ENCODE measurements at regions of chr10 and their contacts with region 1.

Region 1: DNA sequence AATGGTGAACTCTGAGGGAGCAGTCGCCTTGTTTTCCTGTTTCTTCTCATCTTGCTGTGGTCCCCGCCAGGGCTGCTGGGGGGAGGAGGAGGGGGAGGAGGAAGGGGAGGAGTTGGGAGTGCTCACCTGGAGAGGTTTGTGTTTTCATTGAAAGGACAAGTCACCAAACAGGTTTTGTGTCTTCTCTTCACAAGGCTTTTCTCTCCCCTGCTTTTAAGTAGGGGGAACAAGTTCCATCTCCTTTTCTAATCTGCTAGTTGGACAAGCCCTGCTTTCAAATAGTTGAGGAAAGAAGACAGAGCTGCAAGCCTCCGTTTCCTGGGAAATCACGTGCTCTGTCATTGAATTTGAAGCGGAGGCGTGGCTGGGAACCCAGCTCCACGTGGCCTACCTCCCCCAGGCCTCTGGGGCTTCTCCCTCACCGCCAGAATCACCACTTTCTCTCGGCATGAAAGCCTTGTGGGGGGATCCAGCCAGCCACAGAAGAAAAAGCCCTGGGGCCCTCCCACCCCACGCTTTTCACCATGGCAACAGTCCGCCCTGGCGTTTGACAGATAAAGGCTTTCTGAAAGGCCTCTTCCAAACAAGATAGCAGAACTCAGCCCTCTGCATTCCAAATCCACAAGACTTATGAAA is 51.5 kb downstream of the PROSER2 start:
- DNase-seq: peak; percentile 88
- H3K4me3 ChIP-seq: no peak overlapping the region
- H3K27ac ChIP-seq: peak overlapping the region; percentile 64
- H3K4me1 ChIP-seq: peaks cover 39% of the 10 kb centered on the region
- H3K27me3 ChIP-seq: no peaks in the 10 kb centered on the region
- CTCF ChIP-seq: no peak

Region 2: DNA sequence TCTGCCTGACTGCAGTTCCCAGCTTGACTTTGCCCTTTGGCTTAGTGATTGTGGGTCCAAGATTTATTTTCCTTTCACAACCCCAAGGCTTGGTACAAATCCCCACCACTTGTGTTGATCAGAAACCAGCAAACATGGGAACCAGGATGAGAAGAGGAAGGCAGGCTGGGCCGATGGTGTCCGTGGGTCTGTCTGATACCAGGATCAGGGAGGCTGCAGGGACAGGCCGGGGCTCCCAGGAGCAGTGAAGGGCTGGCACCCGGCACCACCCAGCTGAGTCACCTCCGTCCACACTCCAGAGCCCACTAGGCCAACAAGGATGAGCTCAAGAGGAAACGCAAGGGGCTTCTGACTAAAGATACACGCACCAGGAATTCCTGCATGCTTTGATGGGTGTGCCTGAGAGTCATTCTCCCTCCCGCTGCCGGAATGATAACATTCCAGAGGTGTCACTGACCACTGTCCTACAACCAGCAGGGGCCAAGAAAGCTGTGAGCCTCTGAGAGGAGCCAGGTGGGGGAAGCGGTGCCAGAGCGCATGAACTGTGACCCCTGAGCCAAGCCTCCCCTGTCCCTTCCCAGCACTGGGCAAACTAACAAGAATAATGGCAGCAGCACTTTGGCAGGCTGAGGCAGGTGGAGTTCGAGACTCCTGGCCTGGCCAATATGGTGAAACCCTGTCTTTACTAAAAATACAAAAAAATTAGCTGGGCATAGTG is 80.7 kb before region 1 on chr10:
- CTCF ChIA-PET with region 1: no interaction called
- POLR2A ChIA-PET with region 1: no interaction called
- intact Hi-C with region 1: loop called (anchors 10 kb)
- DNase-seq: no peak
- H3K4me3 ChIP-seq: no peak overlapping the region
- H3K27ac ChIP-seq: peak overlapping the region; percentile 48
- H3K4me1 ChIP-seq: peaks cover 52% of the 10 kb centered on the region
- H3K27me3 ChIP-seq: no peaks in the 10 kb centered on the region
- CTCF ChIP-seq: no peak

Region 3: DNA sequence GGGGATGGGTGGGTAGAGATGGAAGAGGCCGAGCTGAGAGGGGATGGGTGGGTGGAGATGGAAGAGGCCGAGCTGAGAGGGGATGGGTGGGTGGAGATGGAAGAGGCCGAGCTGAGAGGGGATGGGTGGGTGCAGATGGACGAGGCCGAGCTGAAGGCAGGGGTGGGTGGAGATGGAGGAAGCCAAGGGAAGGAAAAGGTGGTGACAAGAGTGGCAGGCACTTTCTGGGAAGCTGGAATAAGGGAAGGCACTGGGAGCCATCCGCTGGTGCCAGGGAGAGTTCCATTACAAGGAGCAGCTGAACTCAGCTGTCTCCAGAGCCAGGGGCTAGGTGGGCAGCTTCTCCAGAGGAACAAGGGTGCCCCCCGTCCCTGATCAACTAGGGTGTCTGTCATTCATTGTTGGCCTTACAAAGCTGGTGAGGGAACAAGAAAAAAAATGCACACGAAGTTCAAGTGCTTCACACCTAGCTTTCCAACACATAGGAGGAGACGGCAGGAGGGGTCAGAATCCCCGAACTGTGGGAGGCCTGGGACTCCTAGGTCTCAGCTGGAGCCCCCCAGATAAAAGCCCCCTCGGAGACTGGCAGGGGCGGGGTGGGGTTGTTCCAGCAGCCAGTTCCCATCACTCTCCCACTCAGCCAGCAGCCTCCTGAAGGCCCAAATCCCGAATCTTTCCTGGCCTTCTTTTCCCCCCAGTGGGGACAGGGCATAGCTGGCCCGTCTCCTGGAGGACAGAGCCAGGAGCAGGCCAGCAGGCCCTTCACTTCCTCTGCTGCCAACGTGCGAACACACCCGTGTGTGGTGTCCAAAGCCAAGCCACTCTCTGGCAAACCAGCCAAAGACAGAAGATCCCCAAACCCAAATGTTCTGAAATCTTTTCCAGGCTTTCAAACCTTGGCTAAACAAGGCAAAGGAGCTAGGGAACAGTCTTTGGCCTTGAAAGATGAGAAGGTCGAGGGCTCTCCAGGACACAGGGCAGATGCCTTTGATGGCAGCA is 11.1 kb after region 1 on chr10:
- CTCF ChIA-PET with region 1: interaction called, 10 read pairs
- POLR2A ChIA-PET with region 1: no interaction called
- intact Hi-C with region 1: no loop called
- DNase-seq: no peak
- H3K4me3 ChIP-seq: no peak overlapping the region
- H3K27ac ChIP-seq: peak overlapping the region; percentile 59
- H3K4me1 ChIP-seq: peaks cover 7% of the 10 kb centered on the region
- H3K27me3 ChIP-seq: no peaks in the 10 kb centered on the region
- CTCF ChIP-seq: no peak

Measured in A673 (cell line).